CD4-positive, alpha-beta T cell (primary cell): ENCODE measurements at regions of chr2 and their contacts with region 1.

Region 1: GRCh38 chr2:189466660-189467059 is 25.4 kb downstream of the WDR75 start:
- DNase-seq: peak in 3 of 14 experiments; percentile 34 to 44 (median 34)
- ATAC-seq: no peak
- H3K4me3 ChIP-seq: no peak overlapping the region
- H3K4me3 Mint-ChIP-seq: no peak overlapping the region
- H3K27ac ChIP-seq: no peak overlapping the region
- H3K27ac Mint-ChIP-seq: peak overlapping the region; percentile 20
- H3K4me1 ChIP-seq: no peaks in the 10 kb centered on the region
- H3K4me1 Mint-ChIP-seq: no peaks in the 10 kb centered on the region
- H3K27me3 ChIP-seq: no peaks in the 10 kb centered on the region
- H3K27me3 Mint-ChIP-seq: no peaks in the 10 kb centered on the region
- CTCF ChIP-seq: peak; percentile 20

Region 2: DNA sequence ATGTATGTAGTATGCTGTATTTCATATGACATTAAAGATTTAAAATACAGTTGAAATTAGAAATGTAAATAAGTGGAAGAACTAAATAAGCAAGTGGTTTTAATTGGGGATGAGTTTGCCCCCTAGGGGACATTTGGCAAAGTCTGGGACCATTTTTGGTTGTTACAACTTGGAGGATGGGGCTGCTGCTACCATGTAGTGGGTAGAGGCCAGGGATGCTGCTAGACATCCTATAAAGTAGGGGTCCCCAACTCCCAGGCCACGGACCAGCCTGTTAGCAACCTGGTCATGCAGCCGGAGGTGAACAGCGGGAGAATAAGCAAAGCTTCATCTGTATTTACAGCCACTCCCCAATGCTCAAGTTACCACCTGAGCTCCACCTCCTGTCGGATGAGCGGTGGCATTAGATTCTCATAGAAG is 166.7 kb after region 1 on chr2:
- CTCF ChIA-PET with region 1: no interaction called
- POLR2A ChIA-PET with region 1: no interaction called
- intact Hi-C with region 1: loop called in 1 of 2 experiments (anchors 5 kb)
- DNase-seq: peak in 6 of 14 experiments; percentile 5 to 50 (median 46)
- ATAC-seq: peak; percentile 51
- H3K4me3 ChIP-seq: no peak overlapping the region
- H3K4me3 Mint-ChIP-seq: no peak overlapping the region
- H3K27ac ChIP-seq: no peak overlapping the region
- H3K27ac Mint-ChIP-seq: no peak overlapping the region
- H3K4me1 ChIP-seq: no peaks in the 10 kb centered on the region
- H3K4me1 Mint-ChIP-seq: no peaks in the 10 kb centered on the region
- H3K27me3 ChIP-seq: no peaks in the 10 kb centered on the region
- H3K27me3 Mint-ChIP-seq: no peaks in the 10 kb centered on the region
- CTCF ChIP-seq: peak; percentile 54